ENCODE measurements at regions of chr1 and their contacts with region 1.

Region 1: GRCh38 chr1:20430355-20431175 is 55.4 kb downstream of the CAMK2N1 start:
- DNase-seq: no peak
- ATAC-seq: peak; percentile 87
- H3K4me3 ChIP-seq: no peak overlapping the region
- H3K27ac ChIP-seq: no peak overlapping the region
- H3K4me1 ChIP-seq: peaks cover 3 to 22% of the 10 kb centered on the region in 2 experiments; a peak in 2 of 4 replicates
- H3K27me3 ChIP-seq: no peaks in the 10 kb centered on the region
- CTCF ChIP-seq: peak; percentile 95 to 98 (median 95)
- POLR2A ChIP-seq: no peak
- RAD21 ChIP-seq: peak; percentile 94

Region 2: DNA sequence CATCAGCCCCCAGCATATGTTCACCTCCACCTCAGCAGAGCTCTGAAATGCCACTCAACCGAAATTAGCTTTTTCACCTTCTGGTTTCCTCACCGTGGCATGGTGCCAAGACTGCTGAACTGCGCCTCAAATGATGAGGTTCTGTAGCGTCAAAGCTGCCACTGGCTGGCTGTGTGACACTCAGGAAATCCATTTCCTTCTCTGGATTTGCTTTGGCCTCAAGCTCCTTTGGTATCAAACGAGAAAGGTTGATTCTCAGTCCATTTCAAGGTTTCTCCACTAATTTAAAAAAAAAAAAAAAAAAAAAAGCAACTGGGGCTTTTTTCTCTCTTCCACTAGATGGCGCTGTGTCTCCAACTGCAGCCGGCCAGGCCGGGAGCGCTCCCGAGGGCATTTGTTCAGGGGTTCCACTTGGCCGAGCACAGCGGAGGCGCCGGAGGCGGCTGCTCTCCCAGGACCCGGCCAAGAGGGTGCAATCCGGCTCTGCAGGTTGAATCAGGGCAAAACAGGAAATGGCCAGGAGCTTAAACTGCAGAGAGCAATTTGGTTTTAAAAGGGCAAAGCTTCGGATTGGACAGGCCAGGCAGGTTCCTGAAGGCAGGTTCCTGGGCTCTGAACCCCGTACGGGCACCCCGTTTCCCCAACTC is 217.8 kb before region 1 on chr1:
- CTCF ChIA-PET with region 1: interaction called, 8 read pairs
- POLR2A ChIA-PET with region 1: no interaction called
- RAD21 ChIA-PET with region 1: interaction called in 1 of 2 experiments, 4 read pairs
- intact Hi-C with region 1: loop called (anchors 1 kb)
- DNase-seq: peak; percentile 54
- ATAC-seq: peak; percentile 90
- H3K4me3 ChIP-seq: peak overlapping the region; percentile 2 to 24; a peak in 1 of 4 replicates
- H3K27ac ChIP-seq: no peak overlapping the region
- H3K4me1 ChIP-seq: peaks cover 9 to 28% of the 10 kb centered on the region in 2 experiments
- H3K27me3 ChIP-seq: no peaks in the 10 kb centered on the region
- CTCF ChIP-seq: peak; percentile 76 to 86 (median 81)
- POLR2A ChIP-seq: no peak
- RAD21 ChIP-seq: peak; percentile 86

Region 3: GRCh38 chr1:20540281-20540680 is 109.7 kb after region 1 on chr1:
- CTCF ChIA-PET with region 1: no interaction called
- POLR2A ChIA-PET with region 1: no interaction called
- RAD21 ChIA-PET with region 1: no interaction called
- intact Hi-C with region 1: no loop called
- DNase-seq: no peak
- ATAC-seq: no peak
- H3K4me3 ChIP-seq: no peak overlapping the region
- H3K27ac ChIP-seq: no peak overlapping the region
- H3K4me1 ChIP-seq: no peaks in the 10 kb centered on the region
- H3K27me3 ChIP-seq: no peaks in the 10 kb centered on the region
- CTCF ChIP-seq: no peak
- POLR2A ChIP-seq: no peak
- RAD21 ChIP-seq: no peak

Measured in HCT116 (cell line).